Activated CD8-positive, alpha-beta T cell treated with anti-CD3 and anti-CD28 coated beads for 36 hours (primary cell): ENCODE measurements at regions of chr6 and their contacts with region 1.

Region 1: GRCh38 chr6:16163535-16164300 is 34.8 kb downstream of the MYLIP start:
- DNase-seq: no peak
- ATAC-seq: no peak
- H3K4me3 Mint-ChIP-seq: no peak overlapping the region
- H3K27ac Mint-ChIP-seq: no peak overlapping the region
- H3K4me1 Mint-ChIP-seq: peaks cover 47% of the 10 kb centered on the region
- H3K27me3 Mint-ChIP-seq: peaks cover 8% of the 10 kb centered on the region
- CTCF ChIP-seq: no peak

Region 2: DNA sequence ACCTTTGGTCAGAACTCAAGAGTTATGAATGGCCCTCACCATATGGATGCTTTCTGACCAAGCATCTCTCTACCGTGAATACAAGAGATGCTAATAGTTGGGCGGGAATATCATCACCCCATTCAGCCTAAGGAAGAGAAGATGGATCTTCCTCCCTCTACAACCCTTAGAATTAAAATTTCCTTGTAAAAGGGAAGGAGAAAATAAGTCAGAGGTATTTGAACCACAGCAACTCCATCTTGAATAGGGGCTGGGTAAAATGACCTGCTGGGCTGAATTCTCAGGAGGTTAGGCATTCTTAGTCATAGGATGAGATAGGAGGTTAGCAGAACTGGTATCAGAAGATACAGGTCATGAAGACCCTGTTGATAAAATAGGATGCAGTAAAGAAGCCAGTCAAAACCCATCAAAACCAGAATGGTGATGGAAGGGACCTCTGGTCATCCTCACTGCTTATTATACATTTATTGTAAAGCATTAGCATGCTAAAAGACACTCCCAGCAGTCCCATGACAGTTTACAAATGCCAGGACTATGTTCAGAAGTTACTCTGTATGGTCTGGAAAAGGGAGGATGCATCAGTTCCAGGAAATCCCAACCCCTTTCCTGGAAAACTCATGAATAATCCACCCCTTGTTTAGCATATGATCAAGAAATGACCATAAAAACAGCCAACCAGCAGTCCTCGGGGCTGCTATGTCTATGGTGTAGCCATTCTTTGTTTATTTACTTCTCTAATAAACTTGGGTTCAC is 602.1 kb before region 1 on chr6:
- CTCF ChIA-PET with region 1: no interaction called
- POLR2A ChIA-PET with region 1: no interaction called
- intact Hi-C with region 1: no loop called
- DNase-seq: no peak
- ATAC-seq: no peak
- H3K4me3 Mint-ChIP-seq: no peak overlapping the region
- H3K27ac Mint-ChIP-seq: no peak overlapping the region
- H3K4me1 Mint-ChIP-seq: peaks cover 4% of the 10 kb centered on the region
- H3K27me3 Mint-ChIP-seq: no peaks in the 10 kb centered on the region
- CTCF ChIP-seq: no peak

Region 3: GRCh38 chr6:16136621-16137450 is 26.9 kb before region 1 on chr6:
- CTCF ChIA-PET with region 1: interaction called, 10 read pairs
- POLR2A ChIA-PET with region 1: interaction called, 3 read pairs
- intact Hi-C with region 1: no loop called
- DNase-seq: peak; percentile 71
- ATAC-seq: peak; percentile 90
- H3K4me3 Mint-ChIP-seq: peak overlapping the region; percentile 63
- H3K27ac Mint-ChIP-seq: peak overlapping the region; percentile 89
- H3K4me1 Mint-ChIP-seq: peaks cover 81% of the 10 kb centered on the region
- H3K27me3 Mint-ChIP-seq: no peaks in the 10 kb centered on the region
- CTCF ChIP-seq: no peak